ENCODE measurements at regions of chr12 and their contacts with region 1.

Region 1: DNA sequence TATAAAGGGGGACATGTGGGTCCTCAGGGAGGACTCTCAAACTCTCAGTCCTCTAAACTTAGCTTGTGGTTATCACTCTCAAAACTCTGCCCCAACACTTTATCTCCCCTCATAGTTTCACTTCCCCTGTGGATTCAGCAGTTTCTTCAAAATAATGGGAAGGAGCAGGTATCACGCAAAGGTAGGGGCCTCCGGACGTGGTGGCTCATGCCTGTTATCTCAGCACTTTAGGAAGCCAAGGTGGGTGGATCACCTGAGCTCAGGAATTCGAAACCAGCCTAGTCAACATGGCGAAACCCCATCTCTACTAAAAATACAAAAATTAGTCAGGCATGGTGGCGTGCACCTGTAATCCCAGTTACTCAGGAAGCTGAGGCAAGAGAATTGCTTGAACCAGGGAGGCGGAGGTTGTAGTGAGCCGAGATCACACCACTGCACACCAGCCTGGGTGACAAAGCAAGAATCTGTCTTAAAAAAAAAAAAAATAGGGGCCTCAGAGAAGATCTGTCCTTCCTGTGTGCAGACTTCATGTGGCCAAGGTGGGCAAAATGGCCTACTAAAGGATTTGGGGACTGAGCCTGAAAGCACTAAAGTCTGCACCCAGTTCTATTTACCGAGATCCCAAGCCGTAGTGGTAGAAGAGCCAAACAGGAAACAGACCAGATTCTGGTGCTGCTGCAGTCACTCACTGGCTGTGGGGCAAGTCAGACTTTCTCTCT is 6.4 kb downstream of the ITGB7 start:
- DNase-seq: peak; percentile 77
- H3K4me3 Mint-ChIP-seq: peak overlapping the region; percentile 45
- H3K27ac Mint-ChIP-seq: peak overlapping the region; percentile 88
- H3K4me1 Mint-ChIP-seq: peaks cover 72% of the 10 kb centered on the region
- H3K27me3 Mint-ChIP-seq: no peaks in the 10 kb centered on the region

Region 2: GRCh38 chr12:53079226-53080117 is 121.1 kb before region 1 on chr12 and contains the start of gene SPRYD3:
- CTCF ChIA-PET with region 1: interaction called, 6 read pairs
- POLR2A ChIA-PET with region 1: no interaction called
- intact Hi-C with region 1: loop called (anchors 5 kb)
- DNase-seq: peak; percentile 98
- H3K4me3 Mint-ChIP-seq: peak within 1 kb of the TSS; percentile 85
- H3K27ac Mint-ChIP-seq: peak within 1 kb of the TSS; percentile 81
- H3K4me1 Mint-ChIP-seq: peaks cover 32% of the 10 kb centered on the region
- H3K27me3 Mint-ChIP-seq: no peaks in the 10 kb centered on the region
- total RNA-seq, gene SPRYD3: 32.8 to 35.4 TPM

Region 3: DNA sequence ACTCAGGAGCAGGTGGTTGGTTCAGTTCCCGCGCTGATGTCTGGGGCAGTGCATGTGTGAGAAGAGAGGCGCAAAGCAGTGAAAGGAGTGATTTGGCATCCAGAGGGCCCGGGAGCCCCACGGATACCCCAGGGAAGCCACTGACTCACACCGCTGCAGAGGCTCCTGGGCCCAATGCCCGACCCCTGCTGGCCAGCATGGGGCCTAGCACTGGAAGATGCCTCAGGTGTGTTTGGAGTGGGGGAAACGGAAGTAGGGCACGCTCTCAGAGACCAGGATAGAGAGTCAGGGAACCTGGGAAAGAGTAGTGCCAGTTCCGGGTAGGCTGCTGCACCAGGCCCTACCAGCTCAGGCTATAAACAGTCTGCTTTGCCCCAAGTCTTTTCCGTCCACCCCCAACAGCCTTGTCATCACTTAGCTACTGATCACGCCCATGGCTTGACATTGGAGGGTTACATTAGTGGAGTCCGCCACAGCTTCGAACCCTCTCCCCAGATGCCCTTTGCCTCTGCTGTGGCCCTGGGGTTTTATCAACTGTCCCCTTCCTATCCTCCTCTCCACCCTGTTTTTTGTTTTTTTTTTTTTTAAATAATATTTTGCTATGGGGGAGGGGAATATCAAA is 10.4 kb before region 1 on chr12:
- CTCF ChIA-PET with region 1: interaction called, 52 read pairs
- POLR2A ChIA-PET with region 1: interaction called, 15 read pairs
- intact Hi-C with region 1: no loop called
- DNase-seq: peak; percentile 62
- H3K4me3 Mint-ChIP-seq: no peak overlapping the region
- H3K27ac Mint-ChIP-seq: peak overlapping the region; percentile 72
- H3K4me1 Mint-ChIP-seq: peaks cover 6% of the 10 kb centered on the region
- H3K27me3 Mint-ChIP-seq: no peaks in the 10 kb centered on the region